ENCODE measurements at regions of chr22 and their contacts with region 1.

Region 1: GRCh38 chr22:36470162-36470993 is 11.1 kb downstream of the TXN2 start:
- DNase-seq: peak; percentile 81 to 87
- H3K4me3 ChIP-seq: no peak overlapping the region
- H3K27ac ChIP-seq: peak overlapping the region in 2 of 3 donors; percentile 15 to 26
- H3K4me1 ChIP-seq: peaks cover 5 to 18% of the 10 kb centered on the region in 2 donors
- H3K27me3 ChIP-seq: no peaks in the 10 kb centered on the region
- CTCF ChIP-seq: peak; percentile 83 to 96 (median 90)
- POLR2A ChIP-seq: no peak

Region 2: DNA sequence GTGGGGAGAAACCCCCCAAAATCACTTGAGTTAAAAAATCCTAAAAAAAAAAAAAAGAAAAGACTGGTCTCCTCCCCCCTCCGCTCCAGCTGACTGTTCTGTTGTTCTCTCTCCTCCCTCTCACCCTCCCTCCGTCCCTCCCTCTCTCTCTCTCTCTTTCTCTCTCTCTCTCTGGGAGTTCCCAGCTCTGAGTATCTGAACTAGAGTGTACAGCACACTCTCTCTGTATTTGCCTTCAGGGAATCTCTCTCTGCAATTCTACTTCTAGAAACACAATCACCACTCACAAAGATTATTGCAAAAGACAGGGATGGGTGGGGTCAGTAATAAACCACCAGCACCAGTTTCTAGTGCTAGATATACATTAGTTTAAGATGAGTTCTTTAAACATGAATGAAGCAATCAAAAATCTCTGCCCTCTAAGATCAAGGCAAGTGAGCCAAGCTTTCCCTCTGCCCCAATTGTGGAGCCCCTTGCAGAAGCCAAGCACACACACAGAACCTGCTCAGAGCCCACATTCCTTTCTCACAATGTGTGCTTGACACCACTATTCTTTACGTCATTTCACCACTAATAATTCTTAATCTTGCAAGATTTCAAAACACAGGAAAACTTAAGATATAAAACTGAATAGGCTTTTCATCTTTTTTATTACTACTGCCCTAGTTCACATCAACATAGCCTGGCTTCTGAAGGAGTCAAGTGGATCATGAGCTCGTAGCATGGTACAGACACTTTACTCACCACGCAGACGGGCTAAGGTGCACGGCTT is 575.3 kb before region 1 on chr22:
- intact Hi-C with region 1: no loop called
- DNase-seq: peak; percentile 62 to 64
- H3K4me3 ChIP-seq: no peak overlapping the region
- H3K27ac ChIP-seq: peak overlapping the region; percentile 50 to 70 (median 59)
- H3K4me1 ChIP-seq: peaks cover 11 to 44% of the 10 kb centered on the region in 2 donors
- H3K27me3 ChIP-seq: no peaks in the 10 kb centered on the region
- CTCF ChIP-seq: no peak
- POLR2A ChIP-seq: no peak

Region 3: GRCh38 chr22:36301384-36301828 is 169.0 kb before region 1 on chr22:
- intact Hi-C with region 1: loop called (anchors 2 kb)
- DNase-seq: peak; percentile 76 to 84
- H3K4me3 ChIP-seq: no peak overlapping the region
- H3K27ac ChIP-seq: no peak overlapping the region
- H3K4me1 ChIP-seq: no peaks in the 10 kb centered on the region
- H3K27me3 ChIP-seq: no peaks in the 10 kb centered on the region
- CTCF ChIP-seq: peak; percentile 80 to 95 (median 92)
- POLR2A ChIP-seq: no peak

Region 4: DNA sequence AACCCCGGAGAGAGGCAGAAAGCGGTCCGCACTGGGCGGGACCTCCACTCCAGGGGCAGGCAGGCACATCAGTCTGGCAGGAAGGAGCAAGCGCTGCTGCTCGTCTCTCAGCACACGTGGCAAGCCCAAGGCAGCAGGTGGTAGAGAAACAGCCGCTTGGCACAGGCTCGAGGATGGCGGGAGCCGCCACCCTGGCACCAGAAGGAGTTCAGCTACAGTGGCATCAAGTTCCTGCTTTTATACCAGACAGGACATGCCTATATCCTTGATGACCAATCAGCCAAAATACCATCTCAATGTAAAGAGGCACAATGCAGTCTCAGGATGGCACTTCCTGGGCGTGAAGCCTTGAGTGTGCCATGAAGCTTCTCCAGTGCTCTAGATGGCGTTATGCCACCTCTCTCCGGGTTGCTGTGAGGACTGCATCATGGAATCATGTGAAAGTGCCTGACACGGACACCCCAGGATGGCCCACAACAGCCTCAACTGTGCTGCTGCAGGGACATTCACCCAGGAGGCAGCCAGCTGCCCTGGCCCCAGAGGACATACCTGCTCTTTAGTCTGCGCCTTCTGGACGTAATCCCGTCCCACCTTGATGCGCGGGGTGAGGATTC is 152.6 kb before region 1 on chr22:
- intact Hi-C with region 1: loop called (anchors 5 kb)
- DNase-seq: no peak
- H3K4me3 ChIP-seq: no peak overlapping the region
- H3K27ac ChIP-seq: no peak overlapping the region
- H3K4me1 ChIP-seq: peaks cover 2 to 4% of the 10 kb centered on the region in 2 donors
- H3K27me3 ChIP-seq: no peaks in the 10 kb centered on the region
- CTCF ChIP-seq: no peak
- POLR2A ChIP-seq: no peak

Region 5: GRCh38 chr22:36387752-36388518 is 82.4 kb before region 1 on chr22 and contains the start of gene MYH9:
- intact Hi-C with region 1: loop called (anchors 5 kb)
- DNase-seq: peak; percentile 100
- H3K4me3 ChIP-seq: peak within 1 kb of the TSS; percentile 78 to 88 (median 83)
- H3K27ac ChIP-seq: peak within 1 kb of the TSS; percentile 97 to 99 (median 99)
- H3K4me1 ChIP-seq: peaks cover 34% of the 10 kb centered on the region in 2 donors
- H3K27me3 ChIP-seq: no peaks in the 10 kb centered on the region
- CTCF ChIP-seq: no peak
- POLR2A ChIP-seq: peak; percentile 99
- total RNA-seq, gene MYH9: 228 to 375 (median 275) TPM